Activated naive CD4-positive, alpha-beta T cell treated with anti-CD3 and anti-CD28 coated beads for 36 hours (primary cell): ENCODE measurements at regions of chr2 and their contacts with region 1.

Region 1: GRCh38 chr2:149561309-149561926 is 26.2 kb downstream of the MMADHC start:
- DNase-seq: peak; percentile 17
- H3K4me3 Mint-ChIP-seq: no peak overlapping the region
- H3K27ac Mint-ChIP-seq: no peak overlapping the region
- H3K4me1 Mint-ChIP-seq: no peaks in the 10 kb centered on the region
- H3K27me3 Mint-ChIP-seq: peaks cover 6% of the 10 kb centered on the region

Region 2: GRCh38 chr2:147989809-147990403 is 1571.5 kb before region 1 on chr2:
- CTCF ChIA-PET with region 1: no interaction called
- intact Hi-C with region 1: loop called (anchors 1 kb)
- DNase-seq: peak; percentile 40
- H3K4me3 Mint-ChIP-seq: no peak overlapping the region
- H3K27ac Mint-ChIP-seq: no peak overlapping the region
- H3K4me1 Mint-ChIP-seq: peaks cover 20% of the 10 kb centered on the region
- H3K27me3 Mint-ChIP-seq: no peaks in the 10 kb centered on the region

Region 3: GRCh38 chr2:148634749-148635148 is 926.7 kb before region 1 on chr2:
- CTCF ChIA-PET with region 1: no interaction called
- intact Hi-C with region 1: no loop called
- DNase-seq: no peak
- H3K4me3 Mint-ChIP-seq: no peak overlapping the region
- H3K27ac Mint-ChIP-seq: no peak overlapping the region
- H3K4me1 Mint-ChIP-seq: no peaks in the 10 kb centered on the region
- H3K27me3 Mint-ChIP-seq: no peaks in the 10 kb centered on the region

Region 4: DNA sequence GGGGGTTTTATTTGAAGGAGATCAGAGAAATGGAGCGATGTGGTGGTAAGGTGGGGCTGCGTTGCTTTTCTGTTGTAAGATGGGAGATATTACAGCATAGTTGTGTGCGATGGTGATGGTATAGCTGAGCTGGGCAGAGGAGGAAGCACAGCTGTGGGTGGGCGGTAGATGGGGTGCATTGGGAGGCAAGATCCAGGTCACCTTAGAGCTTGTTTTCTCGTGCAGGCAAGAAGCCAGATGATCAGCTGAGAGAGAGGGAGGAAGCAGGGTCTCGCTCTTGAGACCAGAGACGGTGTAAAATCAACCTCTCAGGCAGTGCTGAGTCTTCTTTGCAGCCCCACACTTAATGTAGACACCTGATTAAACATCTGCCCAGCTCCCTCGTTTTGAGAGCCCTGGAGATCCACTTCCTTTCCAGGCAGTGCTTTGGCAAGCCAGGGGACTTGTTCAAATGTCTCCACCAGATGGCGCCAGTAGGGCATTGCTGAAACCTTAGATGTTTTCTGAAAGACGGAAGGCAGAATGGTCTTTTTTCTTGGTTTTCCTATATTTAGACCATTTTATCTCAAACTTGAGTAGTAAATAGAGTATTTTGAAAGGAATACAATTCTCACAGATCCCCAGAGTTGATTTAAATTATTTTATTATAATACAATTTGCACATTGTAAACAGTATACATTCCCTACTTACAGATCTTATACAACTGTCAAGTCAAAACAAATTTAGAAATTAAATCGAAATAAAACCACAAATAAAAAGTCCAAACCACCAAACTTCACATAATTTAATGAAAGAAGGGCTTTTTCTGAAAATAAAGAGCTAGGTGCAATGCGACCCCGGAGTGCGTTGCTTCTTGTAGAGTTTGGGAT is 544.1 kb before region 1 on chr2:
- CTCF ChIA-PET with region 1: interaction called, 36 read pairs
- intact Hi-C with region 1: loop called (anchors 1 kb)
- DNase-seq: peak; percentile 88
- H3K4me3 Mint-ChIP-seq: no peak overlapping the region
- H3K27ac Mint-ChIP-seq: no peak overlapping the region
- H3K4me1 Mint-ChIP-seq: peaks cover 2% of the 10 kb centered on the region
- H3K27me3 Mint-ChIP-seq: peaks cover 1% of the 10 kb centered on the region

Region 5: GRCh38 chr2:149087751-149088150 is 473.7 kb before region 1 on chr2:
- CTCF ChIA-PET with region 1: no interaction called
- intact Hi-C with region 1: loop called (anchors 1 kb)
- DNase-seq: no peak
- H3K4me3 Mint-ChIP-seq: no peak overlapping the region
- H3K27ac Mint-ChIP-seq: no peak overlapping the region
- H3K4me1 Mint-ChIP-seq: no peaks in the 10 kb centered on the region
- H3K27me3 Mint-ChIP-seq: peaks cover 7% of the 10 kb centered on the region

Region 6: DNA sequence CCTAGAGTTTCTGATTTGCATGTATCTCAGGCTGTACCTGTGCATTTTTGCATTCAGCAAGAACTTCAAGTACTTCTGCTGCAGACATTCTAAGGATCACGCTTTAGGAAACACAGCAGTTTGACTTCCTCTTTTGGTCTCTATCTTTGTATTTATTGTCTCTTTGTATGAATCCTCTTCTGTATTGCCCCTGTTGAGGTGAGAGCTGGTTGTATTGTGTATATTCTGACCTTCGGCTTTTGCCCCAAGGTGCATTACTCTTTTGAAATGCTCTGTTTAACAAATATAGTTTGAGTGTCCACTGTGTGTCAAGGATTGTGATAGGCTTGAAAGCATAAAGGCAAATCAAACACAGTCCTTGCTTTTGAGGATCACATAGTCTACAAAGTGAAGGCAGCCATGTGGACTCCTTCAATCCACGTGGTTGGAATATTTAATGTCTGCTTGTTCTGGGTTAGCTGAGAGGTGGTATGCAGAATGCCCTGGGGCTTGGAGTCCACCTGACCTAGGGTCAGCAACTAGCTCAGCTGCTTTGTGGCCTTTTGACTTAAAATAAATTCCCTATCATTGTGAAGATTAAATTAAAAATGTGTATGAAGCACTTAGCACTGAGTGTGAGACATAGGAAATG is 123.0 kb before region 1 on chr2:
- CTCF ChIA-PET with region 1: no interaction called
- intact Hi-C with region 1: loop called (anchors 5 kb)
- DNase-seq: no peak
- H3K4me3 Mint-ChIP-seq: no peak overlapping the region
- H3K27ac Mint-ChIP-seq: no peak overlapping the region
- H3K4me1 Mint-ChIP-seq: no peaks in the 10 kb centered on the region
- H3K27me3 Mint-ChIP-seq: no peaks in the 10 kb centered on the region

Region 7: GRCh38 chr2:149743842-149744448 is 182.5 kb after region 1 on chr2:
- CTCF ChIA-PET with region 1: no interaction called
- intact Hi-C with region 1: no loop called
- DNase-seq: no peak
- H3K4me3 Mint-ChIP-seq: no peak overlapping the region
- H3K27ac Mint-ChIP-seq: no peak overlapping the region
- H3K4me1 Mint-ChIP-seq: no peaks in the 10 kb centered on the region
- H3K27me3 Mint-ChIP-seq: no peaks in the 10 kb centered on the region